ENCODE measurements at regions of chr10 and their contacts with region 1.

Region 1: DNA sequence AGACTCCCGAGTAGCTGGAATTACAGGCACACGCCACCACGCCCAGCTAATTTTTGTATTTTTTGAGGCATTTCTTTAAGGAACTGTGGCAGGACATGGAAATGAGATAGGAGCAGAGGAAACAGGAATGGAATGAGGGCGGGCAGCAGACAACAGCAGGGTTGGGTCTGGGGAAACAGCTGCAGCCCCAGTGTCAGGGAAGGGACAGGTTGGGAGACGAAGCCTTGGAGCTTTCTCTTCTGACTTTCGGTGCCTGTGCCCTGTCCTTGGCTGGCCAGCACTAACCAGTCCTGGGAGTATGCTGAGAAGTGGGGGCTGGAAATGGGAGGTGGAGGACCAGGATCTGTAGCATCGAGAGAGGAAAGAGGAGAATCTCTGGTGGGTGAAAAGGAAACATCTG is 47.4 kb downstream of the ATOH7 start:
- DNase-seq: no peak
- H3K4me3 Mint-ChIP-seq: no peak overlapping the region
- H3K27ac Mint-ChIP-seq: no peak overlapping the region
- H3K4me1 Mint-ChIP-seq: no peaks in the 10 kb centered on the region
- H3K27me3 Mint-ChIP-seq: peaks cover 40% of the 10 kb centered on the region
- CTCF ChIP-seq: no peak

Region 2: DNA sequence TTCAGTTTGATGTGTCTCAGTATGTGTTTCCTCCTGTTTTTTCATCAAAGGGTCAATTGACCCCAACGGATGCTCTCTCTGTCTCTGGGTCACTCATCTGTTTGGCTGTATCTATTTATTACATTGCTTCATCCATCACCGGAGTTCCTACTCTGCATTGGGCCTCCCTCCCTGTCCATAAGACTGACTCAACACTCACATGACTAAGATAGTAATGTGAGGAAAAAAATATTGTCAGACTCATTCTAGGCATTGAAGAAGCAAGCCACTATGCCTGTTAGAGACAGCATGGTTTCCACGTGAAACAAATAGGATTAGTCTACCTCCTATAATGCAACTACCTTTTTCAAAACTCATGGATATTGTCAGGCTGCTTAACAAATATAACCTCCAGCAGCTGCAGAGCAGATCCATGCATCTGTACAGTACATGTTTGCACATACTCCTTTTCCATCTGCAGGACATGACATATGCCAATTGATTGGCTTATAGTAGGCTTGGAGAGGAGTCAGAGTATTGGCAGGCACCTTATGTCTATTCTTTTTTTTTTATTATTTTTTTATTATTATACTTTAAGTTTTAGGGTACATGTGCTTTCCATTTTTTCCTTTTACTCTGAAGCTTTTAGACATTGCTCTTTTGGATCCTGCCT is 983.5 kb before region 1 on chr10:
- CTCF ChIA-PET with region 1: no interaction called
- intact Hi-C with region 1: no loop called
- DNase-seq: no peak
- H3K4me3 Mint-ChIP-seq: no peak overlapping the region
- H3K27ac Mint-ChIP-seq: no peak overlapping the region
- H3K4me1 Mint-ChIP-seq: no peaks in the 10 kb centered on the region
- H3K27me3 Mint-ChIP-seq: no peaks in the 10 kb centered on the region
- CTCF ChIP-seq: no peak

Region 3: GRCh38 chr10:68096913-68097503 is 87.5 kb before region 1 on chr10:
- CTCF ChIA-PET with region 1: no interaction called
- intact Hi-C with region 1: no loop called
- DNase-seq: peak; percentile 81
- H3K4me3 Mint-ChIP-seq: no peak overlapping the region
- H3K27ac Mint-ChIP-seq: peak overlapping the region; percentile 27
- H3K4me1 Mint-ChIP-seq: peaks cover 41% of the 10 kb centered on the region
- H3K27me3 Mint-ChIP-seq: no peaks in the 10 kb centered on the region
- CTCF ChIP-seq: no peak

Region 4: GRCh38 chr10:68166871-68167585 is 17.5 kb before region 1 on chr10:
- CTCF ChIA-PET with region 1: no interaction called
- intact Hi-C with region 1: loop called (anchors 2 kb)
- DNase-seq: no peak
- H3K4me3 Mint-ChIP-seq: no peak overlapping the region
- H3K27ac Mint-ChIP-seq: no peak overlapping the region
- H3K4me1 Mint-ChIP-seq: peaks cover 9% of the 10 kb centered on the region
- H3K27me3 Mint-ChIP-seq: no peaks in the 10 kb centered on the region
- CTCF ChIP-seq: no peak